Activated T-helper 1 cell treated with anti-CD3 and anti-CD28 coated beads, Interleukin-12 subunit alpha, Interleukin-12 subunit beta, Interleukin-2, Interleukin-4 antibody, amounts not matched to agents 30 ng/mL and 10 ng/mL and 1 ng/mL, durations not matched to agents 14 hours and 24 hours and 36 hours (primary cell): ENCODE measurements at regions of chr3 and their contacts with region 1.

Region 1: GRCh38 chr3:152298393-152299242 is 29.9 kb downstream of the MBNL1 start:
- DNase-seq: peak; percentile 29
- H3K4me3 Mint-ChIP-seq: peak overlapping the region; percentile 68
- H3K27ac Mint-ChIP-seq: peak overlapping the region; percentile 94
- H3K4me1 Mint-ChIP-seq: peaks cover 74% of the 10 kb centered on the region
- H3K27me3 Mint-ChIP-seq: no peaks in the 10 kb centered on the region

Region 2: DNA sequence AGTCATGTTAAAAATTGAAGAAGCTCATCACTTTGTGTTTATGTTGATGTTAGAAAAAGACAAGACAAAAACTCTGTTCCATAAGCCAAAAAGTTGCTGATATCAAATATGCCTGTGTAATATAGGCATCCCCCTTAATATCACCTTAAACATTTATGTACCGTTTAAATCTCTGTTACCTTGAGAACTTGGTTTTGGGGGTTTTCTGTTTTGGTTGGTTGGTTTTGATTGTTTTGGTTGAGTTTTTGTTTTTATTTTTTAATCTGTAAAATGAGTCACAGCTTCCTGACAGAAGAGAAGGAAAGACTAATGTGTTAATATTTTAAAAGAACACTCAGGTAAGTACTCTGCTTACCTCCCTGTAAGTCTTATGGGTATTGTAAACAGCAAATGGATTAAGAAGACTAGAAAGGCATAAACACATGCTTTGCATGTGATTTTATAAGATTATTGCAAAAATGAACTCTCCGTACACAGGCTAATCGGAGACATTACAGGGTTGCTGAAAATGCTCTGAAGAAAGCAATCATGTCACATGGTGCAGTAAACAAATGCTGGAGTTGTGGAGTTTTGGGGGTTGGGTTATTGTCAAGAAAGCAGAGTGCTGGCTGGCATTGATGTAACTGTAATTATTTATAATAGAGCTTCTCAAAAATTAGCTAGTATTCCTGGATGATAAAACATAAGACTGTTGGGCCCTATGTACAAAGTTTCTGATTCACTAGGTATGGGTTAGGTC is 99.3 kb before region 1 on chr3:
- intact Hi-C with region 1: loop called (anchors 2 kb)
- DNase-seq: no peak
- H3K4me3 Mint-ChIP-seq: peak overlapping the region; percentile 76
- H3K27ac Mint-ChIP-seq: peak overlapping the region; percentile 90
- H3K4me1 Mint-ChIP-seq: peaks cover 84% of the 10 kb centered on the region
- H3K27me3 Mint-ChIP-seq: no peaks in the 10 kb centered on the region

Region 3: DNA sequence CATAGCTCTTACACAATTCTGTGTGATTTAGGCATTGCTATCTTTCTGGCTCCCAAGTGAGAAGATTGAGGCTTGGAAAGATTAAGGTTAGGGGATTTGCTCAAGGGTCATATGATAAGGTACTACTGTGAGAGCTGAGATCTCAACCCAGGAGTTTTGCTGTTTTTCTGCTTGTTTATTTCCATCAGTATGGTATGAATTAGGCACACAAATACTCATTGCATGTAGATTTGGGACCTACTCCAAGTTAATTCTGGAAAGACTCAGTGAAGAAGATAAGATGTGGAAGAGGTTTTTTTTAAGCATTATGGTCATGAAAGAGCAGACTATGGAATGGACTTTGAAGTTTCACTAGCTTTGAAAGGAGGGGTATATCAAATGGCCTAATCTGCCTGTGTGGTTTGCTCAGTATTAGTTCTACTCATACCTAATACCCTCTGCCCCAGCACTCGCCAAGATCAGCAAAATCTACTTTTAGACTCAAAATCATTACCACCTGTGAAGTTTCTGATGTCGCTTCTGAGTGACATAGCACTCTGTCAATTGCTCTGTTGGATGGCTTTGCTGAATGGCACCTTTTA is 17.4 kb before region 1 on chr3:
- intact Hi-C with region 1: loop called (anchors 1 kb)
- DNase-seq: no peak
- H3K4me3 Mint-ChIP-seq: peak overlapping the region; percentile 64
- H3K27ac Mint-ChIP-seq: peak overlapping the region; percentile 87
- H3K4me1 Mint-ChIP-seq: peaks cover 85% of the 10 kb centered on the region
- H3K27me3 Mint-ChIP-seq: no peaks in the 10 kb centered on the region

Region 4: DNA sequence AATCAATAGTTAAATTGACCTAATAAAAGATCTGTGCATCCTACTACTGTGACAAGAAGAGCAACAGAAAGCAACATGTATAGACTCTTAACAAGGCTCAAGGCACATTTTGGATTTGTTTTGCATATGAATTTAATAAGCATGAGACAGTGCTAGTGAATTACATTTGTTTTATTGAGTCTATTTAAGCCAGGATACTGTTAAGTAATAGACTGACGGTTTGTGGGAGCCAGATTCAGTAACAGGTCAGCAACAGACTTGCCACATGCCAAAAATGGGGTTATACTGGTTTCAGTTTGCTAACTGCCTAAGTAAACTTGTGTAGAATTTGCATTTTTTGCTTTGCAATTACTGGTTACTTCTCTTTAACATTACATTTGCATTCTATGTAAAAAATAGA is 24.1 kb after region 1 on chr3:
- intact Hi-C with region 1: loop called (anchors 1 kb)
- DNase-seq: no peak
- H3K4me3 Mint-ChIP-seq: peak overlapping the region; percentile 1
- H3K27ac Mint-ChIP-seq: peak overlapping the region; percentile 34
- H3K4me1 Mint-ChIP-seq: peaks cover 80% of the 10 kb centered on the region
- H3K27me3 Mint-ChIP-seq: no peaks in the 10 kb centered on the region